MCF 10A (cell line): ENCODE measurements at regions of chr9 and their contacts with region 1.

Region 1: GRCh38 chr9:137445275-137445807 is 4.2 kb upstream of the ENTPD8 start:
- DNase-seq: peak; percentile 89
- H3K4me3 Mint-ChIP-seq: no peak overlapping the region
- H3K27ac Mint-ChIP-seq: peak overlapping the region; percentile 36
- H3K4me1 Mint-ChIP-seq: peaks cover 11% of the 10 kb centered on the region
- H3K27me3 Mint-ChIP-seq: no peaks in the 10 kb centered on the region
- CTCF ChIP-seq: peak; percentile 88

Region 2: GRCh38 chr9:137286975-137287383 is 158.4 kb before region 1 on chr9:
- CTCF ChIA-PET with region 1: interaction called, 17 read pairs
- POLR2A ChIA-PET with region 1: no interaction called
- intact Hi-C with region 1: loop called (anchors 1 kb)
- DNase-seq: peak; percentile 77
- H3K4me3 Mint-ChIP-seq: no peak overlapping the region
- H3K27ac Mint-ChIP-seq: no peak overlapping the region
- H3K4me1 Mint-ChIP-seq: no peaks in the 10 kb centered on the region
- H3K27me3 Mint-ChIP-seq: no peaks in the 10 kb centered on the region
- CTCF ChIP-seq: peak; percentile 48

Region 3: DNA sequence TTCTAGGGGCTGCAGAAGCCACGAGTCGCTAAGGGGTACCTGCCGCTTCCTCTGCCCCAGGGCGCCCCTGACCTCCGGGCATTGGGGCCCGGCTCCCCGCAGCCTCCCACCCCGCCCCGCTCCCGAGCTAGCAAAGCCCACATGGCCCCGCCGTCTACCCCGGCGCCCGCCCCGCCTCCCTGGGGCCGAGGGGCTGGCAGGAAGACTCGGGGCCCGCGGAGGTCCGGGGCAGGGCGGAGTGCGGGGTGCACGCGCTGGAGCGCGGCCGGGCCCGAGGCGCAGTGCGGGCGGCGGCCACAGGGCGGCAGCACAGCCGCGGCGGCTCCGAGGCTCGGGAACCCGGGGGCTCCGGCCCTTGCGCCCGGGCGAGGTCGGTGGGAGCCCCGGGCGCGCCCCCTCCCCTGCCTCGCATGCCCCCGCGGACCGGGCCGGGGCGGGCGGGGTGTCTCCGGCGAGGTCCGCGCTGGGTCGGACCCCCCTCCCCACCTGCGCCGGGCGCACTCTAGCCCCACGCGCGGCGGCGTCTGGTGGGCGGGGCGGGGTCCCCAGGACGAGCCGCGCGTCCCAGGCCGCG is 150.0 kb before region 1 on chr9:
- CTCF ChIA-PET with region 1: interaction called, 4 read pairs
- POLR2A ChIA-PET with region 1: no interaction called
- intact Hi-C with region 1: loop called (anchors 2 kb)
- DNase-seq: no peak
- H3K4me3 Mint-ChIP-seq: no peak overlapping the region
- H3K27ac Mint-ChIP-seq: no peak overlapping the region
- H3K4me1 Mint-ChIP-seq: no peaks in the 10 kb centered on the region
- H3K27me3 Mint-ChIP-seq: peaks cover 11% of the 10 kb centered on the region
- CTCF ChIP-seq: peak; percentile 61

Region 4: GRCh38 chr9:137423004-137423874 is 22.1 kb before region 1 on chr9 and contains the starts of genes EXD3 and NOXA1:
- CTCF ChIA-PET with region 1: interaction called, 36 read pairs
- POLR2A ChIA-PET with region 1: interaction called, 17 read pairs
- intact Hi-C with region 1: loop called (anchors 1 kb)
- DNase-seq: peak; percentile 93
- H3K4me3 Mint-ChIP-seq: peak within 1 kb of the TSS; percentile 77
- H3K27ac Mint-ChIP-seq: peak within 1 kb of the TSS; percentile 39
- H3K4me1 Mint-ChIP-seq: peaks cover 9% of the 10 kb centered on the region
- H3K27me3 Mint-ChIP-seq: no peaks in the 10 kb centered on the region
- CTCF ChIP-seq: peak; percentile 61
- total RNA-seq, gene EXD3: 17.1 and 23.9 TPM in 2 replicates
- total RNA-seq, gene NOXA1: 8.2 and 8.9 TPM in 2 replicates

Region 5: DNA sequence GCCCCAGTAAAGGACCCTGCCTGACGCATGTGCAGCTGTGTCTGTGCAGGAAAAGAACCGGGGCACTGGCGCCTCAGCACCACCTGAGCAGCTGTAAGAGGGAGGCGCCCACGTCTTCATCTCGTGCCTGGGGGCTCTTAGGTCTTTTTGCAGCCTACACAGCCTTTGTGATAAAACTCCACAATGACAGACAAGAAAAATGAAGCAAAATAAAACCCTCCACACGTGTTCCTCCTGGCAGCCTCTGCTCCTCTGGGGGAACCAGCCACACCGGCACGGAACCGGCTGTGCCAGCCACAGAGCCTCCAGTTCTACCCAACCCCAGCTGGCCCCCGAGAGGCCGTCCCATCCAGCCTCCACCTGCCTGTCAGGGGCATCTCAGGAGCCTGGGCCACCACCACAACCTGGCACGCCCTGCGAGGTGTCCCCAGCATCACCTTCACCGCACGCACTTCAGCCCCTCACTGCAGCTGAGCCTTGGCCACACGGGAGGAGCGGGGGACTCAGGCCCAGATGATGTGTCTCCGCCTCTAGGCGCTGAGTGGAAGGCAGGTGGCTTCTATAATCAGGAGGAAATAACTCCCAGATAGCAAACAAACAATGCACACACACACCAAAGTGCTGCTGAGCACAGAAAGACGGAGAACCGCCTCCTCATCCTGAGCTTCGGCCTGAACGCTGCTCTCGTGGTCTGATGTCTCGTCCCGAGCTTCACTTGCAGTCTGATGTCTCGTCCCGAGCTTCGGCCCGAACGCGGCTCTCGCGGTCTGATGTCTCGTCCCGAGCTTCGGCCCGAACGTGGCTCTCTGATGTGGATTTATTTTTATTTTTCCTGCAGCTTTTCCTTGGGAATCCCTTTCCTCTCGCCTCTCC is 42.3 kb after region 1 on chr9:
- CTCF ChIA-PET with region 1: no interaction called
- POLR2A ChIA-PET with region 1: no interaction called
- intact Hi-C with region 1: no loop called
- DNase-seq: no peak
- H3K4me3 Mint-ChIP-seq: no peak overlapping the region
- H3K27ac Mint-ChIP-seq: no peak overlapping the region
- H3K4me1 Mint-ChIP-seq: no peaks in the 10 kb centered on the region
- H3K27me3 Mint-ChIP-seq: no peaks in the 10 kb centered on the region
- CTCF ChIP-seq: no peak

Region 6: DNA sequence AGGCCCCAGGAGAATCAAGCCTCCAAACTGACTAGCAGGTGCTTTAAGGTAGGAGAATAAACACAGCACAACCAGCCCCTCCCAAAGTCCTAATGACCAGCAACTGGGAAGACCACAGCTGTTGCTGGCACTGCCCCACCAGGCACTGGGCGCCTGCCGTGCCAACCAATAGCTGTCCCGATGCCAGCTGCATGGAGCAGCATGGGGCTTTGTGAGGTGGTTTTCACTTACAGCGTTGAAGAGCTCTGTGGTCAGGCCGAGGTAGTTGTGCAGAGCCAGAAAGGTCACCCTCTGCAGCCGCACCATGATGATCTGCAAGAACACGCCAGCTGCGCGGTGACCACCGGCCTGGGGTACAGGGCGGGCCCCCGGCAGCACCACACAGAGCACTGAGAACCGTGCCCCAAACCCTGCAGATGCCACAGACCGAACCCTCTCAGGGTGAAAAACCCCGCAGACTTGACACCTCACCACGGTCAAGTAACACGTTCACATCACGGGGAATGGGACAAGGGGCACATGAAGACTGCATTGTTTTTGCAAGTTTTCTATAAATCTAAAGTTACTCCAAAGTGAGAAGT is 76.2 kb after region 1 on chr9:
- CTCF ChIA-PET with region 1: no interaction called
- POLR2A ChIA-PET with region 1: interaction called, 3 read pairs
- intact Hi-C with region 1: loop called (anchors 10 kb)
- DNase-seq: no peak
- H3K4me3 Mint-ChIP-seq: no peak overlapping the region
- H3K27ac Mint-ChIP-seq: no peak overlapping the region
- H3K4me1 Mint-ChIP-seq: peaks cover 6% of the 10 kb centered on the region
- H3K27me3 Mint-ChIP-seq: no peaks in the 10 kb centered on the region
- CTCF ChIP-seq: no peak

Region 7: GRCh38 chr9:137590462-137591383 is 145.4 kb after region 1 on chr9 and contains the start of gene ZMYND19:
- CTCF ChIA-PET with region 1: no interaction called
- POLR2A ChIA-PET with region 1: no interaction called
- intact Hi-C with region 1: no loop called
- DNase-seq: peak; percentile 87
- H3K4me3 Mint-ChIP-seq: peak within 1 kb of the TSS; percentile 79
- H3K27ac Mint-ChIP-seq: peak within 1 kb of the TSS; percentile 70
- H3K4me1 Mint-ChIP-seq: no peaks in the 10 kb centered on the region
- H3K27me3 Mint-ChIP-seq: no peaks in the 10 kb centered on the region
- CTCF ChIP-seq: no peak
- total RNA-seq, gene ZMYND19: 42.9 and 51.9 TPM in 2 replicates